Activated CD8-positive, alpha-beta memory T cell treated with anti-CD3 and anti-CD28 coated beads, Interleukin-2, amount 10 ng/mL, durations not matched to agents 7 days and 5 days (primary cell): ENCODE measurements at regions of chr5 and their contacts with region 1.

Region 1: DNA sequence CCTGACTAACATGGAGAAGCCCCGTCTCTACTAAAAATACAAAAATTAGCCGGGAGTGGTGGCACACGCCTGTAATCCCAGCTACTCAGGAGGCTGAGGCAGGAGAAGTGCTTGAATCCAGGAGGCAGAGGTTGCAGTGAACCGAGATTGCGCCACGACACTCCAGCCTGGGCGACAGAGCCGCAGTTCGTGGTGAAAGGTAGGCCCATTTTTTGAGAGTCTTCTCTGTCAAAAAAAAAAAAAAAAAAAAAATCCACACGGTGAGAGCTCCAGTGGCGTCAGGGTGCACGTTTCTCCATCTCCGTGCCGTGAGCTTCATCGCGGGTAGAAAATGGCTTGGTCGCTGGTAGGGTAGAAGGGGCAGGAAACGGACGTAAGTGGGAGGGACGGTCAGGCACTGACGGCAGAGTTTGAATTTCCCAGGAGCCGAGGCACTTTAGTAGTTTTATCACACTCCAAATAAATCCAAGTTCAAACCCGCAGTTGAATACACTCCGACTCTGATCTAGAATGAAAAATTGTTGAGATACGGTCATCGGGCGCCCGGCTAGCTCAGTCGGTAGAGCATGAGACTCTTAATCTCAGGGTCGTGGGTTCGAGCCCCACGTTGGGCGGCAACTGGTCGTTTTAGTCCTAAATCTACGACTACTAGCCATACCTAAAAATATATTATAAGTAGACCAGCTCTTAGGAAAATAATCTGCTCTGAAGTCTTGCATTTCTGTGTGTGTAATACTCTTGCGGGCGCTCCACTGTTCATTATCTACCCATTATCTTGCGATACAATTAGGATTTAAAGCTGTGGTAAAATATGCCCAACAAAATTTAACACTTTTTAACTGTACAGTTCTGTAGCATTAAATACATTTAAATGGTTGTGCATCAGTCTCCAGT is 2.5 kb upstream of the TRIM7 start:
- DNase-seq: peak; percentile 91
- ATAC-seq: peak; percentile 57
- H3K4me3 Mint-ChIP-seq: peak overlapping the region; percentile 85
- H3K27ac Mint-ChIP-seq: peak overlapping the region; percentile 90
- H3K4me1 Mint-ChIP-seq: peaks cover 27% of the 10 kb centered on the region
- H3K27me3 Mint-ChIP-seq: peaks cover 27% of the 10 kb centered on the region

Region 2: GRCh38 chr5:181173420-181174342 is 33.8 kb before region 1 on chr5:
- CTCF ChIA-PET with region 1: interaction called, 12 read pairs
- DNase-seq: peak; percentile 83
- ATAC-seq: peak; percentile 75
- H3K4me3 Mint-ChIP-seq: peak overlapping the region; percentile 79
- H3K27ac Mint-ChIP-seq: peak overlapping the region; percentile 84
- H3K4me1 Mint-ChIP-seq: peaks cover 49% of the 10 kb centered on the region
- H3K27me3 Mint-ChIP-seq: peaks cover 61% of the 10 kb centered on the region

Region 3: GRCh38 chr5:181184857-181185251 is 22.6 kb before region 1 on chr5:
- CTCF ChIA-PET with region 1: interaction called, 129 read pairs
- DNase-seq: no peak
- ATAC-seq: no peak
- H3K4me3 Mint-ChIP-seq: peak overlapping the region; percentile 81
- H3K27ac Mint-ChIP-seq: peak overlapping the region; percentile 98
- H3K4me1 Mint-ChIP-seq: peaks cover 44% of the 10 kb centered on the region
- H3K27me3 Mint-ChIP-seq: peaks cover 12% of the 10 kb centered on the region

Region 4: DNA sequence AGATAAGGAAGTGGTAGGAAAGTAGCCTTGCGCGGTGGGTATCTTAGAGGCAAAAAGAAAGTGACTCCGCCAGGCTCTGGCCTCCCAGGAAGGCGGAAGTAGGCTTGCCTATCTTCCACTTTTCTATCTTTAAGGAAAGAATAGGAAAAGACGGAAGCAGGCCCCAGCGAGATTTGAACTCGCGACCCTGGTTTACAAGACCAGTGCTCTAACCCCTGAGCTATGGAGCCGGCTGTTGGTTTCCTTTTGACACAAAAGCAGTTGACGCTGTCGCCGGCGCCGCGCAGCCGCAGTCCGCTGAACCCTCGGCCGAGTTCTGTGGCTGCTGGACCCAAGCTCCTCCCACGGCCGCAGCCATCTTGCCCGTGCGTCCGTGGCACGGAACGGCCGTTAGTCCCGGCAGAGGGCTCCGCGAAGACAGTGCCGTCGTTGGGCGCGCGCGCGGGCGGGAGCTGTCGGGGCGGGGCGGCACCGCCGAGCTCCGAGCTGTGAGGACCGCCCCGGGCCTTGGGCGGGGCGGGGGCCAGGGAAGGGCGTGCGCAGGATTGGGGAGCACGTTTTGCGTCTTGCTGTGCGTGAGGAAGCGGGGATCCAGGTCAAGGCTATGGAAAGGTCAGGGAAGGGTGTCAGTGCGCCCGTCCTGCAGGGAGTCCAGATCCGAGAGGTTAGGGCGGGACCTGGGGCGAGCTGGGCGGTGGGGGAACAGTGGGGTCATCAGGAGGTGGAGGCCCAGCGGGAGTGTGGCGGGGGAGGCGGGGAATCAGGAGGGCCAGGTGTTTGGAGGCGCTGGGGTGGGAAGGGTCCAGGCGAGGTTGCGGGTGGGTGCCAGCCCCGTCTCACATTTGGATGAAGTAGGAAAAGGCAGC is 15.7 kb before region 1 on chr5:
- CTCF ChIA-PET with region 1: interaction called, 129 read pairs
- DNase-seq: peak; percentile 96
- ATAC-seq: peak; percentile 68
- H3K4me3 Mint-ChIP-seq: peak overlapping the region; percentile 98
- H3K27ac Mint-ChIP-seq: peak overlapping the region; percentile 97
- H3K4me1 Mint-ChIP-seq: peaks cover 26% of the 10 kb centered on the region
- H3K27me3 Mint-ChIP-seq: no peaks in the 10 kb centered on the region

Region 5: DNA sequence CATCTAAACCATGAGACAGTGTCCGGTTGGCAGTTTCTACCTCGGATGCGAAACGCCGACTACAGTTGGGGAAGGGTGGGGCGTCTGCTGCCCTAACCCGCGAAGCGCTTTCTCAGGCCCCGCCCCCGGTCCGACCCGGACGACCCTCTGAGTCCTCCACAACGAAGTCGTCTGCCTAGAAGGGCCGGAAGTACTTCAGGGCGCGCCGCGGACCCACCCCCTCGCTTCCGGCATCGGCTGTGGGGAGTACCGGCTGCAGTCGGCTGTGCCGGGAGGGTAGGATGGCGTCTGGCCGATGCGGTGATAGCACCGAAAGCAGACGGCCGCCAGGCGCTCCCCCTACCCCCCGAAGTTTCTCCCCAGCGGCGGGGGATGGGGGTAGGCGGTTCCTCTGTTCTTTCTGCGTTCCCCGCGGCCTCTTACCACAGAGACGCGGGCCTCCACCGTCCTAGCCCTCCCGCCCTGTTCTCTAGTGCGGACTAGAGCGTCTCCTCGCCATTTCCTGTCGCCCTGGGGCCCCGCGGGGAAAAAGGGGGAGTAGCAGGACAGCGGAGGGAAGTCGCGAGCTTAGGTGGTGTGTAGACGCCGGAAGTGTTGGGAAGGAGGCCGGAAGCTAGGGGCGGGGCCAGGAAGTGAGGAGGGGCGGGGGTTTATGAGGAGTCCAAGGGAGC is 15.7 kb after region 1 on chr5 and contains the start of gene TRIM41:
- CTCF ChIA-PET with region 1: interaction called, 19 read pairs
- DNase-seq: peak; percentile 99
- ATAC-seq: peak; percentile 65
- H3K4me3 Mint-ChIP-seq: peak within 1 kb of the TSS; percentile 89
- H3K27ac Mint-ChIP-seq: peak within 1 kb of the TSS; percentile 99
- H3K4me1 Mint-ChIP-seq: peaks cover 59% of the 10 kb centered on the region
- H3K27me3 Mint-ChIP-seq: peaks cover 5% of the 10 kb centered on the region
- total RNA-seq, gene TRIM41: 40.7 to 44.9 TPM